ENCODE measurements at regions of chr1 and their contacts with region 1.

Region 1: GRCh38 chr1:155017041-155017945 is 14.7 kb downstream of the ZBTB7B start:
- DNase-seq: peak; percentile 88 to 97
- ATAC-seq: peak; percentile 95
- H3K4me3 ChIP-seq: peak overlapping the region in 1 of 2 donors; percentile 32
- H3K27ac ChIP-seq: peak overlapping the region in 1 of 2 donors; percentile 76
- H3K4me1 ChIP-seq: no peaks in the 10 kb centered on the region
- H3K27me3 ChIP-seq: no peaks in the 10 kb centered on the region

Region 2: GRCh38 chr1:154936555-154937084 is 80.7 kb before region 1 on chr1 and contains the start of gene PMVK:
- intact Hi-C with region 1: loop called in 1 of 2 experiments (anchors 1 kb)
- DNase-seq: peak; percentile 97
- ATAC-seq: peak; percentile 97
- H3K4me3 ChIP-seq: peak within 1 kb of the TSS; percentile 42 to 51
- H3K27ac ChIP-seq: peak within 1 kb of the TSS; percentile 68 to 95
- H3K4me1 ChIP-seq: no peaks in the 10 kb centered on the region
- H3K27me3 ChIP-seq: no peaks in the 10 kb centered on the region
- total RNA-seq, gene PMVK: 21.9 to 27.3 TPM

Region 3: DNA sequence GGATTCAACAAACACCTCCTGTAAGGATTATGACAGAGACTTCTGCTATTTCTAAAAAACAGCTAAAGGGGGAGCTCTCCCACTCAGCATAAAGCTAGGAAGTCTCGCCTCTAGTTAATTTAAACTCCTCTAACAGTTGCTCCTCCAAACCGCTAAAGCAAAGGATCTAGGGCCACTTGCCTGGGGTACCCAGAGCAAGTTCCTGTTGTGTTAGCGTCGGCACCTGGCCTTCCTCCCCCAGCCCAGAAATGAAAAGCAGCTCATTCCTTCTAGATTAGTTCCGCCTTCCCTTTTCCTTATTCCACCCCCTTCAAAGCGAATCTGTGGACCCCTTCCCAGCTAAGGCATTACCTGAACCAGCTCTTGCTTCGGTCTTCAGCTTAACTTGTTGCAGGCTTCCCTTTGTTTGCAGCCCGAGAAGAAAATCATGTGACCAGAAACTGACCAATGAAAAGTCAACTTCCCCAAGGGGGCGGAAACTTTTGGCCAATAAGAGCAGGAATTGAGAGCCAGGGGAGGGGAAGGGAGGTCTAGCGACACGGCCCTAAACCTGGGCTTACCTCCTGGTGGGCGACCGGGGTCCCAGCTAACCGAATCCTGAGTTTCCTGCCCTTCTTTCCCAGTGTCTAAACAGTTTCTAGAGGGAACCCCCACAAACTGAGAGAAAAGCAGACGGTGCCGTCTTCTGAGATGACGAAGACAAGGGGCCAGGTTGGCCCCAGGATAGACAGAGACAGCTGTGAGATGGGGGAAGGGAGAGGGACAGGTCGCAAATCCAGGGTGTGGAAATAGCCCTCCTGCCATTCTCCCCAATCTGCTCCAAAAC is 61.4 kb before region 1 on chr1 and contains the start of gene PBXIP1:
- intact Hi-C with region 1: loop called in 1 of 2 experiments (anchors 5 kb)
- DNase-seq: peak in 1 of 2 donors; percentile 79
- ATAC-seq: peak; percentile 90
- H3K4me3 ChIP-seq: peak within 1 kb of the TSS; percentile 72 to 74
- H3K27ac ChIP-seq: peak within 1 kb of the TSS; percentile 8 to 86
- H3K4me1 ChIP-seq: peaks cover 0 to 5% of the 10 kb centered on the region in 2 donors
- H3K27me3 ChIP-seq: no peaks in the 10 kb centered on the region
- total RNA-seq, gene PBXIP1: 106 to 119 TPM

Region 4: GRCh38 chr1:154974063-154974807 is 43.1 kb before region 1 on chr1 and contains the start of gene CKS1B:
- intact Hi-C with region 1: loop called in 1 of 2 experiments (anchors 5 kb)
- DNase-seq: peak; percentile 98
- ATAC-seq: peak; percentile 92
- H3K4me3 ChIP-seq: peak within 1 kb of the TSS; percentile 81 to 89
- H3K27ac ChIP-seq: peak within 1 kb of the TSS; percentile 72 to 86
- H3K4me1 ChIP-seq: no peaks in the 10 kb centered on the region
- H3K27me3 ChIP-seq: no peaks in the 10 kb centered on the region
- total RNA-seq, gene CKS1B: 19.3 to 25.5 TPM